Endothelial cell of umbilical vein (primary cell): ENCODE measurements at regions of chr9 and their contacts with region 1.

Region 1: GRCh38 chr9:15642369-15642962 is 89.6 kb downstream of the CCDC171 start:
- DNase-seq: peak; percentile 59
- H3K4me3 ChIP-seq: no peak overlapping the region
- H3K27ac ChIP-seq: no peak overlapping the region
- H3K4me1 ChIP-seq: peaks cover 8% of the 10 kb centered on the region
- H3K27me3 ChIP-seq: no peaks in the 10 kb centered on the region
- CTCF ChIP-seq: peak; percentile 24 to 25
- POLR2A ChIP-seq: no peak

Region 2: GRCh38 chr9:15501179-15501578 is 141.3 kb before region 1 on chr9:
- CTCF ChIA-PET with region 1: no interaction called
- POLR2A ChIA-PET with region 1: no interaction called
- dilution Hi-C with region 1: no loop called
- intact Hi-C with region 1: loop called (anchors 2 kb)
- DNase-seq: peak; percentile 72
- H3K4me3 ChIP-seq: no peak overlapping the region
- H3K27ac ChIP-seq: no peak overlapping the region
- H3K4me1 ChIP-seq: peaks cover 7% of the 10 kb centered on the region
- H3K27me3 ChIP-seq: no peaks in the 10 kb centered on the region
- CTCF ChIP-seq: no peak
- POLR2A ChIP-seq: no peak

Region 3: GRCh38 chr9:15824310-15824709 is 181.8 kb after region 1 on chr9:
- CTCF ChIA-PET with region 1: no interaction called
- POLR2A ChIA-PET with region 1: no interaction called
- dilution Hi-C with region 1: no loop called
- intact Hi-C with region 1: loop called (anchors 5 kb)
- DNase-seq: peak; percentile 23
- H3K4me3 ChIP-seq: no peak overlapping the region
- H3K27ac ChIP-seq: no peak overlapping the region
- H3K4me1 ChIP-seq: no peaks in the 10 kb centered on the region
- H3K27me3 ChIP-seq: no peaks in the 10 kb centered on the region
- CTCF ChIP-seq: no peak
- POLR2A ChIP-seq: no peak